Breast epithelium (tissue), 4 donors: ENCODE measurements at regions of chr11 and their contacts with region 1.

Region 1: DNA sequence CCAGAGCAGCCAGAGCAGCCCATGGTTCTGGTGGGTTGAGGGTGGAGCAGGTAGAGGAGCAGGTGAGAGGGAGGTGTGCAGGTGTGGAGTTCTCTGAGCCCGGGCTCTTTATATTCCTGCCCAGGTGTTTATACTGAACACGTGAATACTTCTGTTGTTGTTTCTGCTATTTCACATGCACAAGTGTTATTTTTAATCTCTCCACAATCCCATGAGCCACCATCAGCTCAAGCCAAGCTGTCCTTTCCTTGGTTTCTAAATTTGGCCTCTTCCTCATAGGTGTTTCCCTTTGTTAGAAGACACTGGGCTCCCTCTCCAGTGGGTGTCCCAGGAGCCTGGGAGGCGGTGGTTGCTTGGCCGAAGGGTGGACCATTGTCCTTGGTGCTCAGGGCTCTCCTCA is at the start of gene KRTAP5-3:
- DNase-seq: no peak
- H3K4me3 ChIP-seq: no peak within 1 kb of the TSS
- H3K27ac ChIP-seq: no peak within 1 kb of the TSS
- H3K4me1 ChIP-seq: no peaks in the 10 kb centered on the region
- H3K27me3 ChIP-seq: peaks cover 0 to 17% of the 10 kb centered on the region in 2 donors
- CTCF ChIP-seq: no peak
- POLR2A ChIP-seq: no peak
- total RNA-seq, gene KRTAP5-3: not detected

Region 2: GRCh38 chr11:1592628-1593027 is 15.7 kb before region 1 on chr11:
- intact Hi-C with region 1: loop called (anchors 1 kb)
- DNase-seq: no peak
- H3K4me3 ChIP-seq: no peak overlapping the region
- H3K27ac ChIP-seq: no peak overlapping the region
- H3K4me1 ChIP-seq: no peaks in the 10 kb centered on the region
- H3K27me3 ChIP-seq: no peaks in the 10 kb centered on the region
- CTCF ChIP-seq: no peak
- POLR2A ChIP-seq: no peak

Region 3: GRCh38 chr11:1672613-1673350 is 64.4 kb after region 1 on chr11:
- intact Hi-C with region 1: loop called (anchors 2 kb)
- DNase-seq: peak in 1 of 2 donors; percentile 9
- H3K4me3 ChIP-seq: no peak overlapping the region
- H3K27ac ChIP-seq: no peak overlapping the region
- H3K4me1 ChIP-seq: no peaks in the 10 kb centered on the region
- H3K27me3 ChIP-seq: peaks cover 0 to 48% of the 10 kb centered on the region in 2 donors
- CTCF ChIP-seq: no peak
- POLR2A ChIP-seq: no peak

Region 4: DNA sequence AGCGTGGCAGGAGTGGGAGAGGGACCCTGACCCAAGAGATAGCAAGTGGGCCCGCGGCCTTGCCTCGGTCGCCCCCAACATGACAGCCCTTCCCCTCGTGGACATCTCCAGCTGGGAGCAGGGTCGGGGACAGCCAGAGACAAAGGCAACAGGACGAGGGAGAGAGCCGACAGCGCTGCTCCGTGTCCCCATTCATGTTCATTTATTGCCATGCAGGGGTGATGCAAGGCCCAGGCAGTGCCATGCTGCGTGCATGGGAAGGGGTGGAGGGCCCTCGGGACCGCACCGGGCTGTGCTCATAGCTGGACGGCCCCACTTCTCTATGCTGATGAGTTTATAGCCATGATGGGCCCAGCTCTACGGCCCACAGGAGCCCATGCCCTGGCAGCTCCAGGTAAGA is 351.4 kb after region 1 on chr11:
- intact Hi-C with region 1: no loop called
- DNase-seq: no peak
- H3K4me3 ChIP-seq: no peak overlapping the region
- H3K27ac ChIP-seq: no peak overlapping the region
- H3K4me1 ChIP-seq: no peaks in the 10 kb centered on the region
- H3K27me3 ChIP-seq: no peaks in the 10 kb centered on the region
- CTCF ChIP-seq: no peak
- POLR2A ChIP-seq: no peak